Gastrocnemius medialis (tissue), 4 donors: ENCODE measurements at regions of chr3 and their contacts with region 1.

Region 1: DNA sequence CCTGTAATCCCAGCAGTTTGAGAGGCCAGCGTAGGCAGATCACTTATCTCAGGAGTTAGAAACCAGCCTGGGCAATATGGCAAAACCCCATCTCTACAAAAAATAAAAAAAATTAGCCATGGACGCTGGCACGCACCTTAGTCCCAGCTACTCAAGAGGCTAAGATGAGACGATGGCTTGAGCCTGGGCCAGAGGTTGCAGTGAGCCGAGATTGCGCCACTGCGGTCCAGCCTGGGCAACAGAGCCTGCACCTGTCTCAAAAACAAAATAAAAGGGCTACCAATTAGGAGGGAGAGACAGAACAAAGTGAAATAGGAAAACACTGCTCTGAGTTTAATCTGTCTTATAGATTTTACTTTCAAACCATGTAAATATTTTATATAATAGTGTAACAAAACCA is 33.8 kb downstream of the MSL2 start:
- DNase-seq: peak; percentile 67 to 90
- ATAC-seq: peak; percentile 95 to 96
- H3K4me3 ChIP-seq: no peak overlapping the region
- H3K27ac ChIP-seq: peak overlapping the region; percentile 61 to 79 (median 64)
- H3K4me1 ChIP-seq: peaks cover 52 to 64% of the 10 kb centered on the region in 2 donors
- H3K27me3 ChIP-seq: no peaks in the 10 kb centered on the region
- CTCF ChIP-seq: no peak
- POLR2A ChIP-seq: no peak

Region 2: GRCh38 chr3:136050250-136050649 is 112.1 kb before region 1 on chr3:
- in situ Hi-C with region 1: no loop called
- intact Hi-C with region 1: no loop called
- DNase-seq: no peak
- ATAC-seq: no peak
- H3K4me3 ChIP-seq: no peak overlapping the region
- H3K27ac ChIP-seq: peak overlapping the region in 3 of 4 donors; percentile 2 to 49 (median 14)
- H3K4me1 ChIP-seq: peaks cover 15 to 27% of the 10 kb centered on the region in 2 donors
- H3K27me3 ChIP-seq: no peaks in the 10 kb centered on the region
- CTCF ChIP-seq: no peak
- POLR2A ChIP-seq: no peak

Region 3: DNA sequence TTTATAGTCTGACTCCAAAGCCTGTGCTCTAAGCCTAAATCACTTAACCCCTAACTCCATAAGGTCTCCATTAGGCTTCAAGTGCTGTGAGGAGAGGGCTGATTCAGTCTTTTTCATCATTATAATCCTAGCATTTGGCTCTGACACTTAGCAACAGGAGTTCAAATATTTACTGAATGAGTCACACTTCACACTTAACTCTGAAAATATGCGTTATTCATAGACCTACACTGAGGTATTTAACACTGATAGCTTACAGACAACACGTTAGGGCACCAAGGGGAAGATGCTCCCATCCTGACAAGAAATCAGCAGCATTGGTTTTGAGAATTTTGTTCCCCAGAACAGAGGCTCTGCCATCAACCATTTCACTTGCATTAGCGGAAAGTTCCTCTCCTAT is 19.7 kb before region 1 on chr3:
- in situ Hi-C with region 1: no loop called
- intact Hi-C with region 1: no loop called
- DNase-seq: no peak
- ATAC-seq: peak in 1 of 2 donors; percentile 50
- H3K4me3 ChIP-seq: no peak overlapping the region
- H3K27ac ChIP-seq: peak overlapping the region in 1 of 4 donors; percentile 51
- H3K4me1 ChIP-seq: no peaks in the 10 kb centered on the region
- H3K27me3 ChIP-seq: no peaks in the 10 kb centered on the region
- CTCF ChIP-seq: no peak
- POLR2A ChIP-seq: no peak

Region 4: GRCh38 chr3:136196401-136197158 is 34.3 kb after region 1 on chr3:
- in situ Hi-C with region 1: no loop called
- intact Hi-C with region 1: loop called (anchors 2 kb)
- DNase-seq: peak; percentile 97 to 99
- ATAC-seq: peak; percentile 78 to 84
- H3K4me3 ChIP-seq: peak overlapping the region; percentile 84 to 95 (median 92)
- H3K27ac ChIP-seq: peak overlapping the region; percentile 91 to 100 (median 100)
- H3K4me1 ChIP-seq: peaks cover 32 to 38% of the 10 kb centered on the region in 2 donors
- H3K27me3 ChIP-seq: no peaks in the 10 kb centered on the region
- CTCF ChIP-seq: no peak
- POLR2A ChIP-seq: peak; percentile 69 to 80

Region 5: GRCh38 chr3:136305878-136306277 is 143.6 kb after region 1 on chr3:
- in situ Hi-C with region 1: no loop called
- intact Hi-C with region 1: no loop called
- DNase-seq: no peak
- ATAC-seq: no peak
- H3K4me3 ChIP-seq: no peak overlapping the region
- H3K27ac ChIP-seq: no peak overlapping the region
- H3K4me1 ChIP-seq: no peaks in the 10 kb centered on the region
- H3K27me3 ChIP-seq: no peaks in the 10 kb centered on the region
- CTCF ChIP-seq: no peak
- POLR2A ChIP-seq: no peak